GM23248 (cell line): ENCODE measurements at regions of chr1 and their contacts with region 1.

Region 1: DNA sequence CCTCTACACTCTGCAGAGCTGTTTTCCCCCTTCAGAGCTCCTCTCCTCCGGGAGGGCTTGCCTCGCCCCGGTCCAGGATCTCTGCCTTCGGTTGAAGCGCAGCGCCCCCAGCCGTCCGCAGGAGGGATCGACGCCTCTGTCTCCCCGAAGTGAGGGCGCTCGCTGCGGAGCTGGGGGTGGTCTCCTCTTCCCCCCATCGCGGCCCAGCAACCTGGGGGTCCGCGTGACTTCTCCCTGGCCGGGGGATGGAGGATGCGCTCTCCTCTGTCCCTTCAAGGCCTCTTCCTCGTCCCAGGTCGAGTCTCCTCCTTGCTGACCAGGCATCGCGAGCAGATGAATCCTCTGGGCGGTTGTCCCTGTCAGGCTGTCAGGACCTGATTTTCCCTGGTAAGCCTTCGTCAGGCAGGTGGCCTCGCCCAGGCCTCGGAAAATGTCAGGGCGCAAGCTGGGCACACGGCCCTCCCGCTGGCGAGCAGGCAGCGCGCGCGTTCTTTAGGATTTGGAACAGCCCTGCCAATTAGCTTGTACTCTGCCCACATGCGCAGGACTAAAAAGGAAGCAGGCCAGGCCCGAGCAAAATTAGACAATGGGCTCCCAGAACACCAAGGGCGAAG is 90.5 kb downstream of the EDEM3 start:
- DNase-seq: peak; percentile 84
- H3K4me3 ChIP-seq: peak overlapping the region; percentile 63
- H3K27ac ChIP-seq: no peak overlapping the region
- H3K4me1 ChIP-seq: no peaks in the 10 kb centered on the region
- H3K27me3 ChIP-seq: peaks cover 10% of the 10 kb centered on the region

Region 2: DNA sequence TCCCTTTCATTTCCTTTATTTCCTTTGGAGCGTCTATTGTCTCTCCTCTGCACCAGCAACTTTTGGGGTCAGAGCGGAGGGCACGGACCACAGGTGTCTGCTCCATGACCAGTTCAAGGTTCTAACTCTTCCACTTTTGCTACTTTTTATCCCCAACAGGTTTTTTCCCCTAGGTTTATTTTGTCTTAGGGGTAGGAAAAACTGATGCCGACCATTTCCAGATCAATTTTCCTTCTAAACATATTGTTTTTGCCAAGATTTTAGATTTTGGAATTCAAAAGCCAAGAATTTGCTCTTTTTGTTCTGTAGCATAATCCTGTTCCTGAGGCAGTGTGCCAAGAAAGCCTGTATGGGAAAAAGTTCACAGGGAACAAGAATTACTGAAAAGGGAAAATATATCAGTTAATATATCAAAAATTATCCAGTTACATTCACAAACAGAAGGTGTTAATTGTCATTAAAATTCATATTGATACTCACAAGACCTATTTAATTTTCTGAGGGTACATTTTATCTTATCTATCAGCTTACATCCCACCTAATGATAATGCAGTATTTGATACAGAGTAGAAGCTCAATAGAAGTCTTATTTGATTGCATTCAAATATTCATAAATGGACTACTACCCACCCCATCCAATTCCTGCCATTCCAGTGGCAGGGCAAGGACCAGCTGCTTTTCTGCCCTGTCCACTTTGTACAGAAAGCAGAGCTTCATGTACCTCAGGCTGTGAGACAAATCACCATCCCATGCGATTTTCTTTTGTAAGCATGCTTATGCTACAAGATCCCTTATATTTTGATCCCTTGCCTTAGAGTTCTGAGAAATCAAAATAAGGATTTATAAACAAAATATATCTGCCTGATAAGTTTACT is 581.4 kb before region 1 on chr1:
- in situ Hi-C with region 1: loop called (anchors 10 kb)
- DNase-seq: no peak
- H3K4me3 ChIP-seq: no peak overlapping the region
- H3K27ac ChIP-seq: no peak overlapping the region
- H3K4me1 ChIP-seq: no peaks in the 10 kb centered on the region
- H3K27me3 ChIP-seq: no peaks in the 10 kb centered on the region

Region 3: DNA sequence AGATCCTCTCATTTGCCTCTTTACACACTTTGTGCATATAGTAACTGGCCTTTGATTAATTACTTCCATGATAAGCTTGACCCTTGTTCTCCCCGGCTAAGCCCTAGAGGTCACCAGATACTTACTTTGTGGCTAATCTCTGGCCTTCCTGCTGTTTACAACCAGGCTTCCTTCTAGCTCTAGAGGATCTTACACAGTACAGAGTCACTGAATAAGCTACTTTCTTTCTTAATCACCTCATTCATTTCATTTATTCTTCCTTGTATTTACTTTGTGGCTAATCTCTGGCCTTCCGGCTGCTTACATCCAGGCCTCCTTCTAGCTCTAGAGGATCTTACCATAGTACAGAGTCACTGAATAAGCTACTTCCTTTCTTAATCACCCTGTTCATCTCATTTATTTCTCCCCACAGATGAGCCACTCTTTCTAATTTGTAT is 421.6 kb before region 1 on chr1:
- in situ Hi-C with region 1: loop called (anchors 25 kb)
- DNase-seq: peak; percentile 58
- H3K4me3 ChIP-seq: no peak overlapping the region
- H3K27ac ChIP-seq: no peak overlapping the region
- H3K4me1 ChIP-seq: peaks cover 13% of the 10 kb centered on the region
- H3K27me3 ChIP-seq: no peaks in the 10 kb centered on the region; the same call in 1 of the 2 replicates

Region 4: GRCh38 chr1:184386312-184387068 is 277.7 kb before region 1 on chr1 and contains the start of gene C1orf21:
- in situ Hi-C with region 1: loop called (anchors 10 kb)
- DNase-seq: peak; percentile 93
- H3K4me3 ChIP-seq: peak within 1 kb of the TSS; percentile 96
- H3K27ac ChIP-seq: peak within 1 kb of the TSS; percentile 61
- H3K4me1 ChIP-seq: peaks cover 22% of the 10 kb centered on the region
- H3K27me3 ChIP-seq: no peaks in the 10 kb centered on the region
- total RNA-seq, gene C1orf21: 11.6 and 20.0 TPM in 2 replicates

Region 5: GRCh38 chr1:184563308-184563707 is 100.8 kb before region 1 on chr1:
- in situ Hi-C with region 1: loop called (anchors 10 kb)
- DNase-seq: peak; percentile 46
- H3K4me3 ChIP-seq: no peak overlapping the region
- H3K27ac ChIP-seq: no peak overlapping the region
- H3K4me1 ChIP-seq: peaks cover 10% of the 10 kb centered on the region
- H3K27me3 ChIP-seq: no peaks in the 10 kb centered on the region